Body of pancreas (tissue), 4 donors: ENCODE measurements at regions of chr11 and their contacts with region 1.

Region 1: GRCh38 chr11:64152841-64153691 is 12.8 kb downstream of the MACROD1 start:
- DNase-seq: peak; percentile 49 to 73 (median 66)
- ATAC-seq: peak; percentile 76
- H3K4me3 ChIP-seq: no peak overlapping the region
- H3K27ac ChIP-seq: no peak overlapping the region
- H3K4me1 ChIP-seq: peaks cover 37% of the 10 kb centered on the region
- H3K27me3 ChIP-seq: no peaks in the 10 kb centered on the region
- CTCF ChIP-seq: peak; percentile 88 to 100 (median 94)
- POLR2A ChIP-seq: no peak

Region 2: GRCh38 chr11:64000026-64000739 is 152.9 kb before region 1 on chr11:
- intact Hi-C with region 1: loop called (anchors 2 kb)
- DNase-seq: peak; percentile 53 to 73 (median 63)
- ATAC-seq: peak; percentile 65
- H3K4me3 ChIP-seq: no peak overlapping the region
- H3K27ac ChIP-seq: no peak overlapping the region
- H3K4me1 ChIP-seq: peaks cover 40% of the 10 kb centered on the region
- H3K27me3 ChIP-seq: no peaks in the 10 kb centered on the region
- CTCF ChIP-seq: peak; percentile 45 to 94 (median 81)
- POLR2A ChIP-seq: no peak